Panc1 (cell line): ENCODE measurements at regions of chr1 and their contacts with region 1.

Region 1: GRCh38 chr1:29055160-29055559 is 68.5 kb downstream of the TMEM200B start:
- DNase-seq: no peak
- ATAC-seq: no peak
- H3K4me3 ChIP-seq: no peak overlapping the region
- H3K27ac ChIP-seq: no peak overlapping the region
- H3K4me1 ChIP-seq: no peaks in the 10 kb centered on the region
- H3K27me3 ChIP-seq: no peaks in the 10 kb centered on the region
- CTCF ChIP-seq: no peak

Region 2: DNA sequence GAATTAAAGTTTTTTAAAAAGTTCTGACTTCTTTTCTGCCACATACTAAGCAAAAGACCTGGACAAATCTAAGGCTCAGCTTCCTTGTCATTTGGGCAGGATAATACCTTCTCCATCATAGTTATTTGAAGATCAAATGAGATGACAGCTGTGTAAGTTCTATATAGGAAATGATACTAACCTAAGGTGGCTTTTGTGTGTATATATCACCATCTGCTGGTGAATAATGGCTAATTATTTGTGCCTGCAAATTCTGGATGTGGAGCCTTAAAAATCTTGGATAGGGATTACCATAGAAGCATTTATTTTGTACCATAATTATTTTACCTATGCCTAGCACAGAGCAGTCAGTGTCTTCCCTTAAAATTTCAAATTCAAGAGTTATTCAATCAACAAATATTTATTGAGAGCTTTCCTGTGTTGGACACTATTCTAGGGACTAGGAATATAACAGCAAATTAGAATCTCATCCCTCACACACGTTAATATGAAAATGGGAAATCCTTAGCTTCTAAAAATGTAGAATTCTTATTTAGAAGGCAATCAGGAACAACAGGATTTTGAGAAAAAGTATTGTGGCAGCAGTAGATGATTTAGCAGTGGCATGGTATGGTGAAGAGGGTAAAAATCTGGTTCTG is 21.2 kb before region 1 on chr1:
- CTCF ChIA-PET with region 1: interaction called, 10 read pairs
- POLR2A ChIA-PET with region 1: no interaction called
- in situ Hi-C with region 1: no loop called
- intact Hi-C with region 1: no loop called
- DNase-seq: peak; percentile 30
- ATAC-seq: peak; percentile 78
- H3K4me3 ChIP-seq: no peak overlapping the region
- H3K27ac ChIP-seq: no peak overlapping the region
- H3K4me1 ChIP-seq: no peaks in the 10 kb centered on the region
- H3K27me3 ChIP-seq: no peaks in the 10 kb centered on the region
- CTCF ChIP-seq: peak; percentile 64; the same call in 1 of the 2 replicates

Region 3: DNA sequence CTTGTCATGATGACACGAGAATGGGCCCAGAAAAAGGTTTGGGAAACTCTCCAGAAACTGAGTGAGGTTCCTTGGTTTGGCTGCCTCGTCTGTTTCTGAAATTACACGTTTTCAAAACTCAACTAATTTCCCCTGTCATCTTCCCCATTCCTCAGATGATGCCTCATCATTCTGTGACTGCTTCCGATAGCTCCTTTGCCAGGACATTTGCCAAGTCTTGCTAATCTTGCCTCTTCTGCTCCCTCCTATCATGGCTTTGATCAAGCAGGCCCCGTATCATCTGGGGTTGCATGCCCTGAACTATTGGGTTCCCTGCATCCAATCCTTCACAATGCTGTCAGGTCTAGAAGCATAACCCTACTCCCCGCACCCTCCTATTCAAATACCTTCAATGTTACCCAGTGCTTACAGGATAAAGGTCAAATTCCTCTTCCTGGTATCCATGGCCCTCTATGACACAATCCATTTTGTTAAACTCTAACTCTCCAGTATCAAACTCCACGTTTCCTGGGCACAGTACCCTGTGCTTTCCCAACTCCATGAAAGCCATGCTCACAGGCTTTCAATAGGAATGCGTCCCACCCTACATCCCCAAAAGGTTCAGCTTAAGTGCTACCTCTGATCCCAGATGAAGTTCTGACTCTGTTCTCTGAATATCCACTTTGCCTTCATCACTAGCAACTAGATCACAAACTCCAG is 90.7 kb after region 1 on chr1:
- CTCF ChIA-PET with region 1: no interaction called
- POLR2A ChIA-PET with region 1: no interaction called
- in situ Hi-C with region 1: no loop called
- intact Hi-C with region 1: no loop called
- DNase-seq: no peak
- ATAC-seq: no peak
- H3K4me3 ChIP-seq: no peak overlapping the region
- H3K27ac ChIP-seq: no peak overlapping the region
- H3K4me1 ChIP-seq: no peaks in the 10 kb centered on the region
- H3K27me3 ChIP-seq: no peaks in the 10 kb centered on the region
- CTCF ChIP-seq: no peak